ENCODE measurements at regions of chr12 and their contacts with region 1.

Region 1: GRCh38 chr12:109110988-109111495 is 5.3 kb upstream of the ACACB start:
- DNase-seq: peak; percentile 87
- ATAC-seq: peak; percentile 96
- H3K4me3 Mint-ChIP-seq: peak overlapping the region; percentile 56
- H3K27ac Mint-ChIP-seq: peak overlapping the region; percentile 97
- H3K4me1 Mint-ChIP-seq: peaks cover 20% of the 10 kb centered on the region
- H3K27me3 Mint-ChIP-seq: no peaks in the 10 kb centered on the region
- CTCF ChIP-seq: no peak

Region 2: DNA sequence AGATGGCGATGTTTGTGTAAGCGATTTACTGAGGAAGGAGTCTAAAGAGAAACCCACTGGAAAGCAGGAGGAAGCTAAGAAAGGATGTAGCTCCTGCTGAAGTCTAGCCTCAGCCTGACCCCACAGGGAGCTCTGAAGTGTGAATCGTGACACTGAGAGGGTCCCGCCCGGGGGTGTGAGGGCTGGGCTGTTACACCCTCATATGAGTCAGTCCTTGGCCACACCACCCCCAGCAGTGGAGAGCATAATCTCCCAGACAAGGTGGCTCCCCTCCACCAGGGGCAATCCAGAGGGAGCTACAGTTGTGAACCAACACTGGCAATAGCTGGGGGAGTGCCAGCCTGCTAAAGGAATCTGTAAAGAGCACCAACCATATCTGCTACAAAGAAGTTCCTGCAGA is 121.7 kb before region 1 on chr12:
- CTCF ChIA-PET with region 1: no interaction called
- POLR2A ChIA-PET with region 1: no interaction called
- DNase-seq: no peak
- ATAC-seq: no peak
- H3K4me3 Mint-ChIP-seq: no peak overlapping the region
- H3K27ac Mint-ChIP-seq: no peak overlapping the region
- H3K4me1 Mint-ChIP-seq: no peaks in the 10 kb centered on the region
- H3K27me3 Mint-ChIP-seq: peaks cover 22% of the 10 kb centered on the region
- CTCF ChIP-seq: no peak

Region 3: DNA sequence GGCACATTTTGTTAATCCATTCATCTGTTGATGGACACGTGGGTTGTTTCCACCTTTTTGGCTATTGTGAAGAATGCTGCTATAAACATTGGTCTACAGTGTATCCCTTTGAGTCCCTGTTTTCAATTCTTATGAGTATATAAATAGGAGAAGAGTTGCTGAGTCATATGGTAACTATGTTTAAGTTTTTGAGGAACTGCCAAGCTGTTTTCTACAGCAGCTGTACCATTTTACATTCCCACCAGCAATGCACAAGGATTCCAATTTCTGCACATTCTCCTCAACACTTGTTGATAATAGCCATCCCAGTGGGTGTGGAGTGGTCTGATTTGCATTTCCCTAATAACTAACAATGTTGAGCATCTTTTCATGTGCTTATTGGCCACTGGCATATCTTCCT is 83.3 kb before region 1 on chr12:
- CTCF ChIA-PET with region 1: no interaction called
- POLR2A ChIA-PET with region 1: no interaction called
- DNase-seq: no peak
- ATAC-seq: no peak
- H3K4me3 Mint-ChIP-seq: no peak overlapping the region
- H3K27ac Mint-ChIP-seq: no peak overlapping the region
- H3K4me1 Mint-ChIP-seq: no peaks in the 10 kb centered on the region
- H3K27me3 Mint-ChIP-seq: peaks cover 19% of the 10 kb centered on the region
- CTCF ChIP-seq: no peak

Region 4: GRCh38 chr12:109057376-109057775 is 53.7 kb before region 1 on chr12:
- CTCF ChIA-PET with region 1: no interaction called
- POLR2A ChIA-PET with region 1: no interaction called
- DNase-seq: no peak
- ATAC-seq: no peak
- H3K4me3 Mint-ChIP-seq: no peak overlapping the region
- H3K27ac Mint-ChIP-seq: no peak overlapping the region
- H3K4me1 Mint-ChIP-seq: peaks cover 7% of the 10 kb centered on the region
- H3K27me3 Mint-ChIP-seq: no peaks in the 10 kb centered on the region
- CTCF ChIP-seq: no peak

Region 5: GRCh38 chr12:109097435-109098182 is 13.4 kb before region 1 on chr12 and contains the start of gene UNG:
- CTCF ChIA-PET with region 1: interaction called, 11 read pairs
- POLR2A ChIA-PET with region 1: no interaction called
- DNase-seq: peak; percentile 96
- ATAC-seq: peak; percentile 91
- H3K4me3 Mint-ChIP-seq: peak within 1 kb of the TSS; percentile 81
- H3K27ac Mint-ChIP-seq: peak within 1 kb of the TSS; percentile 68; the same call in 1 of the 2 replicates
- H3K4me1 Mint-ChIP-seq: peaks cover 16% of the 10 kb centered on the region
- H3K27me3 Mint-ChIP-seq: peaks cover 7% of the 10 kb centered on the region
- CTCF ChIP-seq: no peak
- total RNA-seq, gene UNG: 125 to 135 TPM (median 127 TPM) in 3 replicates

Region 6: GRCh38 chr12:109134186-109134917 is 23.3 kb after region 1 on chr12:
- CTCF ChIA-PET with region 1: interaction called, 13 read pairs
- POLR2A ChIA-PET with region 1: no interaction called
- DNase-seq: peak; percentile 75
- ATAC-seq: peak; percentile 93
- H3K4me3 Mint-ChIP-seq: no peak overlapping the region
- H3K27ac Mint-ChIP-seq: no peak overlapping the region
- H3K4me1 Mint-ChIP-seq: peaks cover 2% of the 10 kb centered on the region; the same call in 1 of the 2 replicates
- H3K27me3 Mint-ChIP-seq: no peaks in the 10 kb centered on the region; the same call in 1 of the 2 replicates
- CTCF ChIP-seq: no peak; the same call in 1 of the 2 replicates

Region 7: DNA sequence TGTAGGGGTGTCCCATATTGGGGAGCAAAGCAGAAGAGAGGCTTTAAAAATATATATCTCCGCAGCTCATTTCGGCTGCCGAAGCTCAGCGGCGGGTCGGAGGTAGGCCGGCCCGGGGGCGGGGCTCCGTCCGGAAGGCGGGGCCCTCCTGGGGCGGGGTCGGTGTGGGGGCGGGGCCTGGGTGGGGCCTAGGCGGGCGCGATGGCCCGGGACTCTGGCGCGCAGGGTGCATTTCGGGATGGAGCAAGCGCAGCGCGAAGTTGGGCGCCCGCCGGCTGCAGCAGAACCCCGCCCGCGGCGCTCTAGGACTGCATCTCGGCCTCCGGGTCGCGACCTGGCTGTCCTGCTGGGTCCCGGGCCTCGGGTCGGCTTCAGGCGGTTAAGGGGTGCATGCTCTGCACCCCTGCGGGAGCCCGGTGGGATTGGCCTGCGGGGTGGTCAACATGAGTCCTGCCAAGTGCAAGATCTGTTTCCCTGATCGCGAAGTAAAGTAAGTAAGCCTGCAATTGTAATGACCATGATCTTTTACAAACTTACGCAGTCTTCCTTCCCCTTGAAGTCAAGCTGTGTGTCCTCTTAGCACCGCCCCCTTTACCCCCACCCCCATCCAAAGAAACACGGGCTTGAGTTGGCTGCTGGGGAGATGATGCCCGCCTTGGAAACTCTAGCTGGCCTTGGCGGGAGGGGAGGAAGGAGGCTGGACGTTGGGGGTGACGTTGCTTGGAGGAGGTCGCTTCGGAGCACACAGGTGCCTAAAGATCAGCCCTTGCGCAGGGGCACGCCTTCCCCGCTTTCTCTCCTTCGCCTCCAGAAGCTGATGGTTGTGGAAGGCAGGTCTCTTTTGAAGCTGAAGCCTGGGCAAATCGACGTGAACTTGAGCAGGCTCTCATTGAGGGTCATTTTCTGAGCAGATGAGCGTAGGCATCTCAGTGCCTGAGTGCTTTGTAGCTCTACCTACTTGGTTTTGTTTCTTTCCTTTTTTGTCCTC is 43.7 kb after region 1 on chr12:
- CTCF ChIA-PET with region 1: interaction called, 20 read pairs
- POLR2A ChIA-PET with region 1: interaction called, 4 read pairs
- DNase-seq: peak; percentile 89
- ATAC-seq: peak; percentile 95
- H3K4me3 Mint-ChIP-seq: peak overlapping the region; percentile 87
- H3K27ac Mint-ChIP-seq: peak overlapping the region; percentile 97
- H3K4me1 Mint-ChIP-seq: peaks cover 13% of the 10 kb centered on the region
- H3K27me3 Mint-ChIP-seq: peaks cover 18% of the 10 kb centered on the region
- CTCF ChIP-seq: no peak

Region 8: DNA sequence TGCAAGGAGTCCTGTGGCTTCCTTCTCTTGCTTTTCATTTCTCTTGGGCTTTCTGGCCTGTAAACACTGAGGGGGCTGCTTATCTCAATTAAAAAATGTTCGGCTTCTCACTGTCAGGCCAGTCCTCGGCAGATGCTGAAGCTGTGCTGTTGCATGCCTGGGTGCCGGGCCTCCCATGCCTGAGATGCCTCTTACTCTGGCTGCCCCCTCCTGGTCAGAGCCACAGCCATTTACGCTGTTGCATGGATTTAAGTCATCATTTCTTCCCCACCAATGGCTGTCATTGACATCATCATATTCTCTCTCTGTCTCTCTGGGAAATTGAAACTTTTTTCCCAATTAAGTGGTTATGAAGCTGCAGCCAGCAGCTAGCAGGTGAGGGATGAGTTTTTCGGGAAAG is 144.3 kb after region 1 on chr12:
- CTCF ChIA-PET with region 1: interaction called, 11 read pairs
- POLR2A ChIA-PET with region 1: no interaction called
- DNase-seq: peak; percentile 46
- ATAC-seq: peak; percentile 84
- H3K4me3 Mint-ChIP-seq: no peak overlapping the region
- H3K27ac Mint-ChIP-seq: no peak overlapping the region
- H3K4me1 Mint-ChIP-seq: no peaks in the 10 kb centered on the region; the same call in 1 of the 2 replicates
- H3K27me3 Mint-ChIP-seq: no peaks in the 10 kb centered on the region
- CTCF ChIP-seq: no peak

Region 9: GRCh38 chr12:109385339-109386067 is 274.5 kb after region 1 on chr12:
- CTCF ChIA-PET with region 1: interaction called, 13 read pairs
- POLR2A ChIA-PET with region 1: no interaction called
- DNase-seq: no peak
- ATAC-seq: no peak
- H3K4me3 Mint-ChIP-seq: no peak overlapping the region
- H3K27ac Mint-ChIP-seq: no peak overlapping the region
- H3K4me1 Mint-ChIP-seq: no peaks in the 10 kb centered on the region
- H3K27me3 Mint-ChIP-seq: peaks cover 9% of the 10 kb centered on the region
- CTCF ChIP-seq: peak; percentile 17; the same call in 1 of the 2 replicates

Region 10: DNA sequence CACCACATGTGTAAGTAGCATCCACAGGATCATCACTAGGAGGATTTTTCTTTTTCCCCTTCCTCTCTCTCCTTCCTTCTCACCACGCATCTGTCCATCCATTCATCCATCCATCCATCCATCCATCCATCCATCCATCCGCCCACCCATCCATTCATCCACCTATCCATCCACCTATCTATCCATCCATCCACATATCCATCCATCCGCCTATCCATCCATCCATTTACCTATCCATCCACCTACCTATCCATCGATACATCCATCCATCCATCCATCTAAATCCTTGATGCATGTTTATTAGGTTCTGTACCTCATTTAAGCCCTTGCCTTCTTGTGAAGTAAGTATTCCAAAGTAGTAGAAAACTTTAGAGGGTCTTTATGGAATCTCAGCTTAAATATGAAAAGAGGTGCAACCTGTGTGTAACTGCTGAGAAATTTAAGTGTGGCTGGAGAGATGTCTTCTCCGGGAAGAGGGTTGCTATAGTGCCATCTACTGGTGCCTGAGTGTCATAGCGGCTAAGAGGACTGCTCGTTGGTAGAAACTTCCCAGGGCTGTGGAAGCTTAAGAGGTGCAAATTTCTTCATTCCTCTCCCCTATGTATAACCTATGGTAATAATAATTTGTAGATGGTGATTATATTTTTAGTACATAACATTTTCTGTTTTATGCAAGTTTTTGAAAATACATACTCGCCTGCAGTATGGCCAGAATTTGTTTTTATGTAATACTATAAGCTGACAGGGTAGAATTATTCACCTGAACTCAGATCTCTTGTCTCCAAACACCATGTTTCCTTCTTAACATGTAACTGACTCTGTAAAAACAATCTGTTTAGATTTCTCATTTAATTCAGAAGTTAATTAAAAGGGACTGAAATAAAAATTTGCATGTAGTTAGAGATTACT is 282.6 kb after region 1 on chr12:
- CTCF ChIA-PET with region 1: interaction called, 11 read pairs
- POLR2A ChIA-PET with region 1: no interaction called
- DNase-seq: peak; percentile 45
- ATAC-seq: peak; percentile 85
- H3K4me3 Mint-ChIP-seq: no peak overlapping the region
- H3K27ac Mint-ChIP-seq: no peak overlapping the region
- H3K4me1 Mint-ChIP-seq: no peaks in the 10 kb centered on the region
- H3K27me3 Mint-ChIP-seq: peaks cover 2% of the 10 kb centered on the region; the same call in 1 of the 2 replicates
- CTCF ChIP-seq: peak; percentile 64

Measured in WTC11 (cell line).